ENCODE measurements at regions of chr13 and their contacts with region 1.

Region 1: GRCh38 chr13:32315238-32316027 is at the starts of genes BRCA2 and ZAR1L:
- DNase-seq: peak; percentile 90
- ATAC-seq: peak; percentile 94
- H3K4me3 Mint-ChIP-seq: peak within 1 kb of the TSS; percentile 94
- H3K27ac Mint-ChIP-seq: peak within 1 kb of the TSS; percentile 100
- H3K4me1 Mint-ChIP-seq: peaks cover 21% of the 10 kb centered on the region
- H3K27me3 Mint-ChIP-seq: no peaks in the 10 kb centered on the region
- total RNA-seq, gene BRCA2: 25.2 to 26.7 TPM
- total RNA-seq, gene ZAR1L: not detected

Region 2: GRCh38 chr13:32107474-32107873 is 208.0 kb before region 1 on chr13:
- POLR2A ChIA-PET with region 1: no interaction called
- DNase-seq: no peak
- ATAC-seq: no peak
- H3K4me3 Mint-ChIP-seq: no peak overlapping the region
- H3K27ac Mint-ChIP-seq: no peak overlapping the region
- H3K4me1 Mint-ChIP-seq: no peaks in the 10 kb centered on the region
- H3K27me3 Mint-ChIP-seq: peaks cover 2% of the 10 kb centered on the region

Region 3: DNA sequence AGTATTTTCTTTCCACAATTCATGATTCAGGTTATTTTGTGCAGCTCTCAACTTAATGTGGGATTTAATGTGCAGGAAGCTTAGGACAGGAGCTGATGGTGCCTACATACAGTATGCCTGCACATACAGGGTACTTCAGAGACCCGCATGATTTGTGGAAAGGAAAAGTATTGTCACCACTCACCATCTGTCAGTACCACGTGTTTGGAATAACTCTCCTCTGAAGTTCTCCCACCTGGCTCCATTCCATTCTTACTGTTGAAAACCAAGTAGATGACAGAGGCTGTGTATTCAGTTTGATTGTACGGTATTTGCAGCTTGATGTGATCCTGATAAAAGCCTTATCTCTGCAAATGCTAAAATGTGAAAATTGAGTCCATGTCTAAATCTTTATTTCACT is 86.0 kb before region 1 on chr13:
- POLR2A ChIA-PET with region 1: no interaction called
- DNase-seq: no peak
- ATAC-seq: no peak
- H3K4me3 Mint-ChIP-seq: no peak overlapping the region
- H3K27ac Mint-ChIP-seq: no peak overlapping the region
- H3K4me1 Mint-ChIP-seq: no peaks in the 10 kb centered on the region
- H3K27me3 Mint-ChIP-seq: peaks cover 6% of the 10 kb centered on the region

Region 4: GRCh38 chr13:32284927-32285632 is 30.4 kb before region 1 on chr13:
- POLR2A ChIA-PET with region 1: no interaction called
- DNase-seq: no peak
- ATAC-seq: no peak
- H3K4me3 Mint-ChIP-seq: no peak overlapping the region
- H3K27ac Mint-ChIP-seq: no peak overlapping the region
- H3K4me1 Mint-ChIP-seq: no peaks in the 10 kb centered on the region
- H3K27me3 Mint-ChIP-seq: peaks cover 7% of the 10 kb centered on the region

Region 5: GRCh38 chr13:32354040-32354439 is 38.6 kb after region 1 on chr13:
- POLR2A ChIA-PET with region 1: interaction called, 13 read pairs
- DNase-seq: no peak
- ATAC-seq: no peak
- H3K4me3 Mint-ChIP-seq: no peak overlapping the region
- H3K27ac Mint-ChIP-seq: no peak overlapping the region
- H3K4me1 Mint-ChIP-seq: peaks cover 16% of the 10 kb centered on the region
- H3K27me3 Mint-ChIP-seq: no peaks in the 10 kb centered on the region

Region 6: GRCh38 chr13:32381539-32381938 is 66.1 kb after region 1 on chr13:
- POLR2A ChIA-PET with region 1: no interaction called
- DNase-seq: no peak
- ATAC-seq: peak; percentile 72
- H3K4me3 Mint-ChIP-seq: no peak overlapping the region
- H3K27ac Mint-ChIP-seq: no peak overlapping the region
- H3K4me1 Mint-ChIP-seq: peaks cover 2% of the 10 kb centered on the region
- H3K27me3 Mint-ChIP-seq: no peaks in the 10 kb centered on the region

Region 7: GRCh38 chr13:32538621-32539246 is 223.3 kb after region 1 on chr13 and contains the start of gene N4BP2L2:
- POLR2A ChIA-PET with region 1: interaction called, 29 read pairs
- DNase-seq: peak; percentile 83
- ATAC-seq: peak; percentile 95
- H3K4me3 Mint-ChIP-seq: peak within 1 kb of the TSS; percentile 91
- H3K27ac Mint-ChIP-seq: peak within 1 kb of the TSS; percentile 97
- H3K4me1 Mint-ChIP-seq: peaks cover 37% of the 10 kb centered on the region
- H3K27me3 Mint-ChIP-seq: no peaks in the 10 kb centered on the region
- total RNA-seq, gene N4BP2L2: 160 to 180 TPM

Measured in activated naive CD8-positive, alpha-beta T cell treated with anti-CD3 and anti-CD28 coated beads, Interleukin-2, amount 10 ng/mL, durations not matched to agents 7 days and 5 days (primary cell).